MCF 10A (cell line): ENCODE measurements at regions of chr5 and their contacts with region 1.

Region 1: GRCh38 chr5:135944967-135945560 is 9.7 kb downstream of the LECT2 start:
- DNase-seq: peak; percentile 94
- H3K4me3 Mint-ChIP-seq: no peak overlapping the region
- H3K27ac Mint-ChIP-seq: no peak overlapping the region
- H3K4me1 Mint-ChIP-seq: no peaks in the 10 kb centered on the region
- H3K27me3 Mint-ChIP-seq: no peaks in the 10 kb centered on the region
- CTCF ChIP-seq: peak; percentile 80

Region 2: DNA sequence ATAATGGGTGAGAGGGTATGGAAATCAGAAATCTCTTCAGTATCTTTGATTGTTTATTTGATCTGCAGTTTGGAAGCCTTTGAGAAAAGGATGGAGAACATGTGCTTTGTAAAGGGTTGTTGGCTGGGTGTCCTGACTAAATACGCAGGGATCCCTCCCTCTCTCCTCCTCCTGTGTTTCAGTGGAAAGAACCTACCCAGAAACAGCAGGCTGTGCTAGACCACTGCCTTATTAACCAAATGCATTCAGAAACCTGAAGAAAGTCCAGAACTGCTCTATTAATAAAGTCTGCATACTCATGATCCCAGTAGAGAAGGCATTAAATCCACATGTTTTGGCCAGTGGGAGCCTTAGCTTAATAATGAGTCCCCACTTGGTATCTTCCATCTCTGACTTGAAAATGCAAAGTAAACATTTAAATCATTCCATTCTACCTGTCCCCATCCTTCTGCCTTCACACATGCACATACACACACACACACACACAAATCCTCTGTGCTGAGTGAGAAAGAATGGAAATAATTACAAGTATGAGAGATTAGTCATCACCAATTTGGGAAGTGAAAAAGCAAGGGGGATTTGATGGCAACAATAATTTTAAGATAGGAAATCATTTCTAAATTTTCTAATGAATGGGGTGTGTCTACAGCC is 19.7 kb after region 1 on chr5:
- CTCF ChIA-PET with region 1: interaction called, 24 read pairs
- POLR2A ChIA-PET with region 1: interaction called, 3 read pairs
- intact Hi-C with region 1: no loop called
- DNase-seq: no peak
- H3K4me3 Mint-ChIP-seq: no peak overlapping the region
- H3K27ac Mint-ChIP-seq: no peak overlapping the region
- H3K4me1 Mint-ChIP-seq: peaks cover 7% of the 10 kb centered on the region
- H3K27me3 Mint-ChIP-seq: no peaks in the 10 kb centered on the region
- CTCF ChIP-seq: no peak

Region 3: GRCh38 chr5:136020383-136021015 is 75.4 kb after region 1 on chr5:
- CTCF ChIA-PET with region 1: interaction called, 14 read pairs
- POLR2A ChIA-PET with region 1: interaction called, 4 read pairs
- intact Hi-C with region 1: loop called (anchors 1 kb)
- DNase-seq: peak; percentile 100
- H3K4me3 Mint-ChIP-seq: peak overlapping the region; percentile 49
- H3K27ac Mint-ChIP-seq: peak overlapping the region; percentile 63
- H3K4me1 Mint-ChIP-seq: peaks cover 61% of the 10 kb centered on the region
- H3K27me3 Mint-ChIP-seq: no peaks in the 10 kb centered on the region
- CTCF ChIP-seq: no peak

Region 4: DNA sequence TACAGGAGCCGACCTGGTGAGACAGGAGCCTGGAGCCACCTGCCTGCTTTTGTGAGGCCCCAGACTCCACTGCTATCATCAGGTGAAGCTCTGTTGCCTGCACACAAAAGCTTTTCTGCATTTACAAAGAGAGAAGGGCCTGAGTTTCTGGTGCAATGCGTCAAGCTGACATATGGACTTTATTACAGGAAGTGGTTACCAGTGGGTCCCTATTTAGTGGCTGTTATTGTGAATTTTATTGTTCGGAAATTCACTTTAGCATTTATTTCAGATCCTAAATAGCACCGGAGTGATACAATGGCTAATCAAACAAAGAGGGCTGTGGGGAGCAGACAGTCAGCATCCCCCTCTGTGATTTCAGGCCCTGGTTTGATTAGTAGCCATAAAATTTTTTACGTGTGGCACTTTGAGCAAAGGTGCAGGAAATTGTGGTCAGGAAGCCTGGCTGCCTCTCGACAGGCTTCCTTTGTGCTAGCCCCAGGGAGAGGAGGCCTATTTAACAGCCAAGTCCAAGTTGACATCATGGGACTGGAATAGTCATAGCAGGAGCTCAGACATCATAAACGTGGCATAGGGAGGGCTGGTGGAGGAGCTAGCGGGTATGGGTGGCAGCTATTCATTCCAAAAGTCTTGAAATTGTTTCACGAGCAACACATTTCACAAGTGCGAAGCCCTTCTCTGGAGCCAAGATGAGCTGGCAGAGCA is 92.1 kb after region 1 on chr5:
- CTCF ChIA-PET with region 1: interaction called, 17 read pairs
- POLR2A ChIA-PET with region 1: interaction called, 44 read pairs
- intact Hi-C with region 1: loop called (anchors 1 kb)
- DNase-seq: peak; percentile 89
- H3K4me3 Mint-ChIP-seq: peak overlapping the region; percentile 48
- H3K27ac Mint-ChIP-seq: peak overlapping the region; percentile 76
- H3K4me1 Mint-ChIP-seq: peaks cover 77% of the 10 kb centered on the region
- H3K27me3 Mint-ChIP-seq: no peaks in the 10 kb centered on the region
- CTCF ChIP-seq: no peak

Region 5: GRCh38 chr5:136062366-136063274 is 117.6 kb after region 1 on chr5:
- CTCF ChIA-PET with region 1: interaction called, 54 read pairs
- POLR2A ChIA-PET with region 1: interaction called, 14 read pairs
- intact Hi-C with region 1: loop called (anchors 1 kb)
- DNase-seq: peak; percentile 79
- H3K4me3 Mint-ChIP-seq: no peak overlapping the region
- H3K27ac Mint-ChIP-seq: no peak overlapping the region
- H3K4me1 Mint-ChIP-seq: peaks cover 27% of the 10 kb centered on the region
- H3K27me3 Mint-ChIP-seq: no peaks in the 10 kb centered on the region
- CTCF ChIP-seq: peak; percentile 80